HEK293T (cell line): ENCODE measurements at regions of chr10 and their contacts with region 1.

Region 1: DNA sequence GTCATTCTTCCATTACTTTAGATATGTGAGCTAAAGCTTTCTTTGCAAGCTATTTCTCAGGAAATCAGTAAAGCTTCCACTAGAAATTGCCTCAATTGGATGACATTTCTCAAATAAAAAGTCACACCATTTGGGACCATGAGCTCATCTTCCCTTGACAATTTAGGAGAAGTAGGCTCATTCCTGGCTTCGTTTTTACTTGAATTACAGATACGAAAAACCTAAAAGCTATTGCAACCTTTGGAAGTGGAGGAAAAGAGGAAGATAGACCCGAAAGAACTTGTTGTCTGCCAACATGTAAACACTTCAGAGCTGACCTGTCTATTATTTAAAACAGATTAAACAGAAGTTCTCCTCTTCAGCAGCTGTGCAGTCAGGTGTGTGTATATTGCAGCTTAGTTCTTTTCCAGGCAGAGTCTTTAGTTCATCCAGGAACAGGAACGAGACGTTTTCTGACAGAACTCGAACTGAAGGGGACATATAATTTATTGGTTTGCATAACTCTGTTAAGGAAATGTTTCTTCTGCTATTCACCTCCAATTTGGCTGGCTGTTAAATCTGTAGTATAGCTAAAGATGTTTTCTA is 43.1 kb upstream of the ST8SIA6 start:
- DNase-seq: no peak

Region 2: GRCh38 chr10:17166699-17167098 is 330.8 kb before region 1 on chr10:
- CTCF ChIA-PET with region 1: interaction called, 10 read pairs
- POLR2A ChIA-PET with region 1: no interaction called
- DNase-seq: no peak